ENCODE measurements at regions of chr5 and their contacts with region 1.

Region 1: DNA sequence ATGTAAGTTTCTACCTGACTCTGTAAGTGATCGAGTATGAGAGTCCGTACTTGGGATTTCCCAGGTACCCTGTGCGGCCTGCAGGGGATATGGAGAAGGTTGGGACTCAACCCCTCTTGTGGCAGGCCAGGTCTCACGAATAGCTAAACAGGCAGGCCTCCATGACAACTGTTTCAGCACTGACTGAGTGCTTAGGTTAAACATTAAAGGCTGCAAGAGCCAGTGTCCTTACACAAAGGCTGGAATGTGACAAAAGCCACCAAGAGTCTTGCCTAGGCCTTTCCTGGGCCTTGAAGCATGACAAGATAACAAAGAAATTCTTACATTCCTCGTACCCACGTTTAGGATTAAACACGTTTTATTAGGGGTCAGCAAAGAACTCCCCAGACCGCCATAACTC is 58.6 kb downstream of the THBS4 start:
- DNase-seq: no peak

Region 2: DNA sequence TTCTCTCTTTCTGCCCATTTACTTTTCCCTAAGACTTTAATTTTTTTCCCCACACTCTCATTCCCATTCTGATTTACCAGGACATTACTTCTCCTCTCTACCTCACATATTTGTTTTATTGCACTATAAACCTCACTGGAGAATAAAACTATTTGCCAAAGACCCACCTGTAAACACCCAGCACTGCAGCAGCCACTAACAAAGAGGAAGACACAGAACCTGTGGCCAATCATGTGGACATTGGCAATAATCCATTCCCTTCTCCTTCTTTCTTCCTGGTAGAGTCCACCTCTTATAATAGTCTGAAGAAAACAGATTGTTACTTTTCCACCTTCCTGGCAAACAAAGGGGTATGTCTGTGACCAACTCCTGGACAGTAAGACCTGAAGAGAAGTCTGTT is 67.0 kb before region 1 on chr5:
- intact Hi-C with region 1: no loop called
- DNase-seq: no peak

Region 3: GRCh38 chr5:80231243-80231642 is 137.4 kb after region 1 on chr5:
- intact Hi-C with region 1: no loop called
- DNase-seq: no peak

Region 4: DNA sequence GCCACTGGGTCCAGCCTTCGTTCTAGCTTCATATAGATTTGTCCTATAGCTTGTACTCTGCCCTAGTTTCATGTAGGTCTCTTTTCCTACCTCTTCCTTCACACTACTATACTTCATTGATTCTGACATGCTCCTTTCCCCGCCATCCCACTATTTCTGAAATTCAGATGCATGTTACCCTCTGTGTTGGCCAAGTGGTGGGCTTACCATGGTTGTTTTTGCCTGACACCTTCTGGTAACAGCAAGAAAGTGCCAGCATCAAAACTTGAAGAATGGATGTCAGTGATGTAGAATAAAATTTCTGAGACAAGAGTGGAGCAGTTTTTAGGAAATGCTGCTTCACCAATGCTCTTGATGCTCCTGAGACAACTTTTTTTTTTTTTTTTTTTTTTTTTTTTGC is 181.6 kb after region 1 on chr5:
- intact Hi-C with region 1: loop called (anchors 1 kb)
- DNase-seq: peak in 2 of 10 donors; percentile 6 to 37

Region 5: DNA sequence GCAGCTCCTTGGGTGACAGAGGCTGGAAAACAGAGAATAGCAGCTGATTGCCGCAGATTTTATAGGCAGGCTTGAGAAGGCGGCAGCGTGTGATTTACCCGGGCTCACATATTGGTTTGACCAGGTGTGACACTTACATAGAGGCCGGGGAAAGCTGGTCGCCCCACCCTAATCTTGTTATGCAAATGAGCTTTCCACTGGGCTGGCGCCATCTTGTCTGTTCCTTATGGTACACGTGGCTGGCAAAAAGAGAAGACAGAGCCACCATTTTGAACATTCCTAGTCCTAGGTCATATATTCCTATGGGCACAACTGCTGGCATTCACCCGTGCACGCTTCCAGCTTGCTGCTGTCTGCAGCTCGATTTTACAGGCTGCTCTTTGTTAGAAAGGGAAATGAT is 214.7 kb after region 1 on chr5:
- intact Hi-C with region 1: loop called (anchors 1 kb)
- DNase-seq: no peak

Region 6: DNA sequence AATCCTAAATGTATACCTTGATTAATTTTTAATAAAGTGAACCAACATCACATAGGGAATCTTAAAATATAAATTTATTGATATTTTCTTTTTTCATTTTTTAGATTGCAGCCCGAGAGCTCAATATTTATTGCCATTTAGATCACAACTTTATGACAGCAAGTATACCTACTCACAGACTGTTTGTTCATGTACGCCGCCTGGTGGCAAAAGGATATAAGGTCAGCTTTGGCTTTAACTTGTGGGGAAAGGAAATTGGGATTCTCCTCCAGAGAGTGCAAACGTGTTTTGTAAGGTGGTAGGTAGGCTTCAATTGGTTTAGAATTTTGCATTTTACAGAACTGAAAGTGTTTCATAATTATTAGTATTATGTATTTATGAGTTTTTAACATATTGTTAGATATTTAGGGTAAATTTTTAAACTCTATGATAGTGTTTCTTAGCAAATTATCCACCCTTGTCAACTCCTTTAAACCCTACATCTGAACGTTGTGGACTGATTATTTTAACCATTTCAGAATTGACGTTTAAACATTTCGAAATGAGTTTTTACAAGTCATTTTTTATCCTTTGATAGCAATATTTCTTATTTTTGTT is 578.4 kb after region 1 on chr5:
- intact Hi-C with region 1: loop called (anchors 10 kb)
- DNase-seq: peak in 8 of 10 donors; percentile 50 to 86 (median 68)

Measured in posterior cingulate gyrus (tissue), 11 donors.